PC-9 (cell line): ENCODE measurements at regions of chr1 and their contacts with region 1.

Region 1: DNA sequence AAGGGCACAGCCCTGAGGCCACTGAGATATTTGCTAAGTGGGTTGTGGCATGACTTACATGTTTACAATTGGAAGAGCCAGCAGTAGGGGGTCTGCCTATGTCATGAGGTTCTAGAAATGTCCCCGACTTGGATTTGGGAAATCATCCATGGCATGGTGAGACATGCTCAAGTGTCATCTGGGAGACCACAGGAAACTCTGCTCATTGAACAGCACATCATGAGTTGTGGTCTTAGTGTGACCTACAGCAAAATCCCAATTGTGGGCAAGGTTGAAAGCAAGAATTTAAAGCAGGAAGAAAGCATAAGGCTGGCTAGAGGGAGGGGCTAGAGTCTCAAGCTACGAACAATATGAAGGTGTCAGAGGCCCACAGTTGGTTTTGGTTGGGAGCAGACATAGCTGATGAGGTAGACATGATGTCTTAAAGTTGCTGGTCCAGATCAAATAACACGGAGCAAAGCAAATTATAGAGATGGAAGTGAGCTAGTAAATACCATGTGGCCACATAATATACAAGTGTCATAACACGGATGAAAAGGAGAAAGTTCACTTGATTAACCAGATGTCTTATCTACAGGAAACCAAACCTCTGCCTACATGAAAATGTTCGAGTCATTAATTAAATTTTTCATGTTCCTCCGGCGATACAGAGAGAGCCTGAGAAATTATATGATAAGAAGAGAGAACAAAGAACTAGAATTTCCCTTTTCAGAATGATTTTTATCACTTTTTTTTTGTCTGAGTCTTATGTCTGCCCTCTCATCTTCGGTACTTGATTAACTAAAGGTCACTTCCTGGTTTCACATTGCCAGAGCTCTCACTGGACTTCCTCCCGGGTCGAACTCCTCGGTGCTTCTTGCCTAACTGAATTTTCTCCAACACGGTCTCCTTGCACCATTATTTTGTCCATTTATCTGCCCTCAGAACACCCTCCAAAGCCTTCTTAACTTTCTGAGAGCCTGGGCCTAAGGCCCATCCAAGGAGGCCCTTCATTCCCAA is 67.4 kb upstream of the DUSP10 start:
- DNase-seq: no peak
- H3K4me3 ChIP-seq: no peak overlapping the region
- H3K27ac ChIP-seq: peak overlapping the region; percentile 90
- H3K4me1 ChIP-seq: peaks cover 59% of the 10 kb centered on the region
- H3K27me3 ChIP-seq: no peaks in the 10 kb centered on the region
- CTCF ChIP-seq: no peak

Region 2: GRCh38 chr1:221708987-221709386 is 100.3 kb before region 1 on chr1:
- CTCF ChIA-PET with region 1: interaction called, 18 read pairs
- POLR2A ChIA-PET with region 1: no interaction called
- intact Hi-C with region 1: no loop called
- DNase-seq: peak in 1 of 2 experiments; percentile 59
- H3K4me3 ChIP-seq: no peak overlapping the region
- H3K27ac ChIP-seq: no peak overlapping the region
- H3K4me1 ChIP-seq: peaks cover 18% of the 10 kb centered on the region
- H3K27me3 ChIP-seq: no peaks in the 10 kb centered on the region
- CTCF ChIP-seq: no peak

Region 3: DNA sequence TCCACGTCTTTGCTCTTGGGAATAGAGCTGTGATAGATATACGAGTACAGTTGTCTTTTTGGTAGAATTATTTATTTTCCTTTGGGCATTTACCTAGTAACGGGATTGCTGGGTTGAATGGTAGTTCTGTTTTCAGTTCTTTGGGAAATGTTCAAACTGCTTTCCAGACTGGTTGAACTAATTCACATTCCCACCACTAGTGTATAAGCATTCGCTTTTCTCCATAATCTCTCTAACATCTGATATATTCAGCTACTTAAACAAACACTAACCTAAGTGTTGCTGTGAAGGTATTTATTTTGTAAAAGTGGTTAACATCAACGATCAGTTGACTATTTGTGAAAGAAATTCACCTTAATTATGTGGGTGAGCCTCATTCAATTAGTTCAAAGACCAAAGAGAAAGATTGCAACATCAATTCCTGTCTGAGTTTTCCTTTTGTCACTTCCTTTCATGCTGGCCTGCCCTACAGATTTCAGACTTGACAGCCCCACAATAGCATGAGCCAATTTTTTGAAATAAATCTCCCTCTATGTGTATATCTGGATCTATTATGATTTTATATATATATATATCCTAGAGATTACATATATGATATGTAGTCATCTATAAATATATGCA is 40.8 kb before region 1 on chr1:
- CTCF ChIA-PET with region 1: no interaction called
- POLR2A ChIA-PET with region 1: no interaction called
- intact Hi-C with region 1: no loop called
- DNase-seq: no peak
- H3K4me3 ChIP-seq: no peak overlapping the region
- H3K27ac ChIP-seq: no peak overlapping the region
- H3K4me1 ChIP-seq: peaks cover 23% of the 10 kb centered on the region
- H3K27me3 ChIP-seq: no peaks in the 10 kb centered on the region
- CTCF ChIP-seq: no peak

Region 4: GRCh38 chr1:221839796-221840395 is 30.6 kb after region 1 on chr1:
- CTCF ChIA-PET with region 1: no interaction called
- POLR2A ChIA-PET with region 1: interaction called, 4 read pairs
- intact Hi-C with region 1: loop called (anchors 2 kb)
- DNase-seq: peak; percentile 81 to 96
- H3K4me3 ChIP-seq: no peak overlapping the region
- H3K27ac ChIP-seq: peak overlapping the region; percentile 87
- H3K4me1 ChIP-seq: peaks cover 35% of the 10 kb centered on the region
- H3K27me3 ChIP-seq: no peaks in the 10 kb centered on the region
- CTCF ChIP-seq: no peak